B cell (primary cell): ENCODE measurements at regions of chr15 and their contacts with region 1.

Region 1: GRCh38 chr15:52227456-52227855 is 36.3 kb upstream of the GNB5 start:
- DNase-seq: peak; percentile 90
- ATAC-seq: peak; percentile 71
- H3K4me3 ChIP-seq: no peak overlapping the region
- H3K4me3 Mint-ChIP-seq: peak overlapping the region; percentile 30
- H3K27ac ChIP-seq: peak overlapping the region; percentile 62 to 97
- H3K27ac Mint-ChIP-seq: peak overlapping the region; percentile 96
- H3K4me1 ChIP-seq: peaks cover 57 to 88% of the 10 kb centered on the region in 2 donors
- H3K4me1 Mint-ChIP-seq: peaks cover 70% of the 10 kb centered on the region
- H3K27me3 ChIP-seq: no peaks in the 10 kb centered on the region
- H3K27me3 Mint-ChIP-seq: no peaks in the 10 kb centered on the region
- CTCF ChIP-seq: peak; percentile 85

Region 2: GRCh38 chr15:51731549-51732267 is 495.7 kb before region 1 on chr15:
- CTCF ChIA-PET with region 1: no interaction called
- POLR2A ChIA-PET with region 1: no interaction called
- intact Hi-C with region 1: loop called (anchors 5 kb)
- DNase-seq: peak; percentile 91
- ATAC-seq: peak; percentile 72
- H3K4me3 ChIP-seq: peak overlapping the region; percentile 24 to 76 (median 53)
- H3K4me3 Mint-ChIP-seq: peak overlapping the region; percentile 88
- H3K27ac ChIP-seq: peak overlapping the region; percentile 85 to 92
- H3K27ac Mint-ChIP-seq: peak overlapping the region; percentile 94
- H3K4me1 ChIP-seq: peaks cover 93 to 100% of the 10 kb centered on the region in 2 donors
- H3K4me1 Mint-ChIP-seq: peaks cover 94% of the 10 kb centered on the region
- H3K27me3 ChIP-seq: no peaks in the 10 kb centered on the region
- H3K27me3 Mint-ChIP-seq: no peaks in the 10 kb centered on the region
- CTCF ChIP-seq: no peak

Region 3: DNA sequence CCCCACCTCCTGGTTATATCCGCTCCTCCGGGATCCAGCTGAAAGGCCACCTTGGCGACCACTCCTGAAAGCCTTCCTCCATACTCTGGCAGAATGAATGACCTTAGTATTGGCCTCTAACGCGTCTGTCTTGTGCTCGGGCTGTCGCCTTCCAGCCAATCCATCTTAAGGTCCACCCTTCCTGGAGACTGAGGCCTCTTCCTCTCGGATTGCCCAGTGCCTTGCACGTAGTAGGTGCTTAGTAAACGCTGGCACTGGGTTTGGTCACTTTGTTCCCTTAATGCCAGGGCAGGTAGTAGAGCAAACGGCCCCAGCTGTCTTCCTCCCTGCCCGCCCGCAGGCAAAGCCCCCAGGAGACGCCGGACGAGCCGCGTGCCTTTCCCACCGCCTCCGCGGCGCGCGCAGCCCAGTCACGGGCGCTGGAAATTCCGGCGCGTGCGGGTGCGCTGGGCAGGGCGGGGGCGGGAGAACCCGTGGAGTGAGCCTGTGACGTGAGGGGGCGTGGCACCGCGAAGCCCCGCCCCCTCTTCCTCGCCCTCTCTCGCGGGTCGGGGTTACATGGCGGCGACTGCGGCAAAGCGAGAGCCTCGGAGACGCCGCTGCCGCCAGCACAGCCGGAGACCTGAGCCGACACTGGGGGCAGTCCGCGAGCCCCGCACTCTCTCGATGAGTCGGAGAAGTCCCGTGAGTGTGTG is 208.6 kb before region 1 on chr15 and contains the start of gene MAPK6:
- CTCF ChIA-PET with region 1: interaction called, 3 read pairs
- POLR2A ChIA-PET with region 1: interaction called, 4 read pairs
- intact Hi-C with region 1: loop called (anchors 2 kb)
- DNase-seq: peak; percentile 98
- ATAC-seq: peak; percentile 86
- H3K4me3 ChIP-seq: peak within 1 kb of the TSS; percentile 68 to 83 (median 81)
- H3K4me3 Mint-ChIP-seq: peak within 1 kb of the TSS; percentile 98
- H3K27ac ChIP-seq: peak within 1 kb of the TSS; percentile 83 to 86
- H3K27ac Mint-ChIP-seq: peak within 1 kb of the TSS; percentile 100
- H3K4me1 ChIP-seq: peaks cover 24 to 27% of the 10 kb centered on the region in 2 donors
- H3K4me1 Mint-ChIP-seq: peaks cover 30% of the 10 kb centered on the region
- H3K27me3 ChIP-seq: no peaks in the 10 kb centered on the region
- H3K27me3 Mint-ChIP-seq: no peaks in the 10 kb centered on the region
- CTCF ChIP-seq: no peak
- total RNA-seq, gene MAPK6: 17.9 and 20.2 TPM in 2 replicates

Region 4: DNA sequence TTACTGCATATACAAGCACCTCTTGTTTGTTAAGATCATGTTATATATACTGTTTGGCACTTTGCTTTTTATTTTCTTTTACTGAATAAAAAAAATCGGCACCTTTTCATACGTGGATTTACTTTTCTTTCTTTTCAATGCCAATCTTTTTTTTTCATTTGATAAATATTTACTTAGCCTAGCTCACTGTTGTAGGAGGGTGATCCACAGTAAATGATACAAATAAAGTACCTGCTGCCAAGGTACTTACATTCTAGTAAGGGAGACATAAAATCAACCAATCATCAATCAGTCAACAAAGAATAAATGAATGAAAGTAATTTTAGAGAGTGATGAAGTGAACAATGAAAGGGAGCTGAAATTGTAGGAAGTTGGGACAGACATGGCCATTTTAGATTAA is 54.6 kb before region 1 on chr15:
- CTCF ChIA-PET with region 1: interaction called, 24 read pairs
- POLR2A ChIA-PET with region 1: interaction called, 5 read pairs
- intact Hi-C with region 1: no loop called
- DNase-seq: no peak
- ATAC-seq: no peak
- H3K4me3 ChIP-seq: no peak overlapping the region
- H3K4me3 Mint-ChIP-seq: no peak overlapping the region
- H3K27ac ChIP-seq: no peak overlapping the region
- H3K27ac Mint-ChIP-seq: no peak overlapping the region
- H3K4me1 ChIP-seq: peaks cover 10 to 18% of the 10 kb centered on the region in 2 donors
- H3K4me1 Mint-ChIP-seq: peaks cover 62% of the 10 kb centered on the region
- H3K27me3 ChIP-seq: no peaks in the 10 kb centered on the region
- H3K27me3 Mint-ChIP-seq: no peaks in the 10 kb centered on the region
- CTCF ChIP-seq: no peak

Region 5: GRCh38 chr15:52217186-52217585 is 10.3 kb before region 1 on chr15:
- CTCF ChIA-PET with region 1: interaction called, 109 read pairs
- POLR2A ChIA-PET with region 1: interaction called, 9 read pairs
- intact Hi-C with region 1: no loop called
- DNase-seq: peak; percentile 52
- ATAC-seq: peak; percentile 58
- H3K4me3 ChIP-seq: no peak overlapping the region
- H3K4me3 Mint-ChIP-seq: no peak overlapping the region
- H3K27ac ChIP-seq: no peak overlapping the region
- H3K27ac Mint-ChIP-seq: peak overlapping the region; percentile 47
- H3K4me1 ChIP-seq: peaks cover 19 to 21% of the 10 kb centered on the region in 2 donors
- H3K4me1 Mint-ChIP-seq: peaks cover 32% of the 10 kb centered on the region
- H3K27me3 ChIP-seq: no peaks in the 10 kb centered on the region
- H3K27me3 Mint-ChIP-seq: no peaks in the 10 kb centered on the region
- CTCF ChIP-seq: peak; percentile 45

Region 6: DNA sequence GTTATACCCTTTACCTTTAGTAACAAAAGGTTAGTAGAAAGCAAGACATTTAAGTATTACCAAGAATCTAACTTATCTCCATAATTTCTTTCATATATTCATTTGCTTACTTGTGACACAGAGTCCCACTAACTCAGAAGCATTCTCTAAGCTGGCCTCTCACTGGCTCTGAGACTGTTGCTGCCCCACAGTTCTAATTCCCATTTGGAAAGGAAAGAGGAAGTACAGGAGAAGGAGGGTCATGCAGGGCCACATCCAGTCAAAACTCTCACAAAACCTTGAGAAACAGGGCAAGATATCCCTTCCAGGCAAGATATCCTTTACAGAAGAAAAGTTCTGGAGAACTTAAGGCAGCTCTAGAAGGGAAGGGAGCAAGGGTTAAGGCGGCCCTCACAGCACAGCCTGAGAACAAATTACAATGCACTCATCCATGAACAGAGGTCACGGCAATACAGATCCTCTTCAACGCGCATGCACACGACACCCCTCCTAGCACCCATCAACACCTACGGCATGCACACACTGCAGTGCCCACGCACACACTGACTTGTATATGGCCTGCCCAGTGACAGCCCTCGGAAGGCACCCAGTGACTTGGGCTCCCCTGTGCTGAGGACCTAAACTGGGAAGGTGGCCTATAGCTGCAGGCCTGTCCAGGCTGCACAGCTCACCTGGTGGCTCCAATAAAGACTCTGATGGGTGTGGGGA is 81.1 kb after region 1 on chr15:
- CTCF ChIA-PET with region 1: interaction called, 3 read pairs
- POLR2A ChIA-PET with region 1: interaction called, 10 read pairs
- intact Hi-C with region 1: no loop called
- DNase-seq: peak; percentile 35
- ATAC-seq: peak; percentile 76
- H3K4me3 ChIP-seq: peak overlapping the region in 1 of 5 experiments; percentile 34
- H3K4me3 Mint-ChIP-seq: peak overlapping the region; percentile 59
- H3K27ac ChIP-seq: peak overlapping the region; percentile 29 to 52
- H3K27ac Mint-ChIP-seq: peak overlapping the region; percentile 43
- H3K4me1 ChIP-seq: peaks cover 19 to 20% of the 10 kb centered on the region in 2 donors
- H3K4me1 Mint-ChIP-seq: peaks cover 26% of the 10 kb centered on the region
- H3K27me3 ChIP-seq: no peaks in the 10 kb centered on the region
- H3K27me3 Mint-ChIP-seq: no peaks in the 10 kb centered on the region
- CTCF ChIP-seq: no peak

Region 7: GRCh38 chr15:52392008-52392687 is 164.7 kb after region 1 on chr15:
- CTCF ChIA-PET with region 1: no interaction called
- POLR2A ChIA-PET with region 1: no interaction called
- intact Hi-C with region 1: no loop called
- DNase-seq: no peak
- ATAC-seq: no peak
- H3K4me3 ChIP-seq: no peak overlapping the region
- H3K4me3 Mint-ChIP-seq: no peak overlapping the region
- H3K27ac ChIP-seq: no peak overlapping the region
- H3K27ac Mint-ChIP-seq: no peak overlapping the region
- H3K4me1 ChIP-seq: no peaks in the 10 kb centered on the region
- H3K4me1 Mint-ChIP-seq: no peaks in the 10 kb centered on the region
- H3K27me3 ChIP-seq: no peaks in the 10 kb centered on the region
- H3K27me3 Mint-ChIP-seq: no peaks in the 10 kb centered on the region
- CTCF ChIP-seq: no peak

Region 8: DNA sequence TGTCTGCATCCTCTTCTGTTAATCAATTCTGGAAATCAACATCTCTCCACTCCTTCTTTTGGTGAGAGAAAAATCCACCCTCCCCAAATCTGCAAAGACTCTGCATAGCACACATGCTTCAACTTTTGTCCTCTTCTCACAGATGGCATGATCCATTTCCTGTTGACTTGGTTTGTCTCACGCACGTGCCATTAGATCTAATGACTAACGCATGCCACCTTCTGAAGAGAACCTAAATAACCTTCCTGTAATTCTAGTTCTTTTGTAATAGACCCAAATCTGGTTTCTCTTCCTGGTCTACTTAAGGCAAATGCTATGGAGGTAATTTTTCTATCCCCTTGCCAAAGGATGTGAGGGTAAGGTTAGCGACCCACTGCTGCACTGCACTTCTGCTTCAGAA is 502.7 kb after region 1 on chr15:
- CTCF ChIA-PET with region 1: interaction called, 5 read pairs
- POLR2A ChIA-PET with region 1: no interaction called
- intact Hi-C with region 1: loop called (anchors 2 kb)
- DNase-seq: peak; percentile 80
- ATAC-seq: peak; percentile 97
- H3K4me3 ChIP-seq: no peak overlapping the region
- H3K4me3 Mint-ChIP-seq: peak overlapping the region; percentile 64
- H3K27ac ChIP-seq: peak overlapping the region; percentile 46 to 60
- H3K27ac Mint-ChIP-seq: peak overlapping the region; percentile 91
- H3K4me1 ChIP-seq: peaks cover 26 to 31% of the 10 kb centered on the region in 2 donors
- H3K4me1 Mint-ChIP-seq: peaks cover 31% of the 10 kb centered on the region
- H3K27me3 ChIP-seq: no peaks in the 10 kb centered on the region
- H3K27me3 Mint-ChIP-seq: no peaks in the 10 kb centered on the region
- CTCF ChIP-seq: peak; percentile 49